ENCODE measurements at regions of chr4 and their contacts with region 1.

Region 1: DNA sequence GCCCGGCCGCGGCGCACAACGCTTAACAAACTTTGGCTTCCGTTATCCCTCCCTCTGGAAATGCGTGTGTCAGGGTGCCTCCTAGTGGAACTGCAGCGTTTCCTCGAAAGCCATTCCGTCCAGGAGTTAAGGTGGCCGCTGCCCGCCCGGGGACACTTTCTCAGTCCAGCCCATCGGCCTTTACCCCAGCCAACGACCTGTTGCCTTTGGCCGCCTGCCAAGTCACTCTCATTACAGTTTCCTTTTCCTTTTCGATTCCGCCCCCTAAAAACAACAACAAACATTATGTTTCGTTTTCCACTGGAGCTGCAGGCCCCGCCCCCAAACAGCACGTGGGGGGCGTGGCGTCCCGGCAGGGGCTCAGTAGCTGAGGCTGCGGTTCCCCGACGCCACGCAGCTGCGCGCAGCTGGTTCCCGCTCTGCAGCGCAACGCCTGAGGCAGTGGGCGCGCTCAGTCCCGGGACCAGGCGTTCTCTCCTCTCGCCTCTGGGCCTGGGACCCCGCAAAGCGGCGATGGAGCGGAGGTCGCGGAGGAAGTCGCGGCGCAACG is at the start of gene HERC5:
- DNase-seq: peak; percentile 95 to 97
- ATAC-seq: peak; percentile 96
- H3K4me3 ChIP-seq: peak within 1 kb of the TSS; percentile 20 to 82
- H3K27ac ChIP-seq: peak within 1 kb of the TSS; percentile 41 to 57
- H3K4me1 ChIP-seq: no peaks in the 10 kb centered on the region
- H3K27me3 ChIP-seq: no peaks in the 10 kb centered on the region
- total RNA-seq, gene HERC5: 9.6 to 9.8 TPM

Region 2: GRCh38 chr4:88223516-88223915 is 233.3 kb before region 1 on chr4:
- intact Hi-C with region 1: loop called (anchors 5 kb)
- DNase-seq: no peak
- ATAC-seq: no peak
- H3K4me3 ChIP-seq: no peak overlapping the region
- H3K27ac ChIP-seq: no peak overlapping the region
- H3K4me1 ChIP-seq: peaks cover 3% of the 10 kb centered on the region in 2 donors
- H3K27me3 ChIP-seq: no peaks in the 10 kb centered on the region

Region 3: GRCh38 chr4:88284439-88285234 is 172.2 kb before region 1 on chr4 and contains the start of gene PPM1K:
- intact Hi-C with region 1: loop called (anchors 5 to 10 kb)
- DNase-seq: peak; percentile 100
- ATAC-seq: peak; percentile 98
- H3K4me3 ChIP-seq: peak within 1 kb of the TSS; percentile 83
- H3K27ac ChIP-seq: peak within 1 kb of the TSS; percentile 97
- H3K4me1 ChIP-seq: no peaks in the 10 kb centered on the region
- H3K27me3 ChIP-seq: no peaks in the 10 kb centered on the region
- total RNA-seq, gene PPM1K: 39.2 to 51.4 TPM

Region 4: DNA sequence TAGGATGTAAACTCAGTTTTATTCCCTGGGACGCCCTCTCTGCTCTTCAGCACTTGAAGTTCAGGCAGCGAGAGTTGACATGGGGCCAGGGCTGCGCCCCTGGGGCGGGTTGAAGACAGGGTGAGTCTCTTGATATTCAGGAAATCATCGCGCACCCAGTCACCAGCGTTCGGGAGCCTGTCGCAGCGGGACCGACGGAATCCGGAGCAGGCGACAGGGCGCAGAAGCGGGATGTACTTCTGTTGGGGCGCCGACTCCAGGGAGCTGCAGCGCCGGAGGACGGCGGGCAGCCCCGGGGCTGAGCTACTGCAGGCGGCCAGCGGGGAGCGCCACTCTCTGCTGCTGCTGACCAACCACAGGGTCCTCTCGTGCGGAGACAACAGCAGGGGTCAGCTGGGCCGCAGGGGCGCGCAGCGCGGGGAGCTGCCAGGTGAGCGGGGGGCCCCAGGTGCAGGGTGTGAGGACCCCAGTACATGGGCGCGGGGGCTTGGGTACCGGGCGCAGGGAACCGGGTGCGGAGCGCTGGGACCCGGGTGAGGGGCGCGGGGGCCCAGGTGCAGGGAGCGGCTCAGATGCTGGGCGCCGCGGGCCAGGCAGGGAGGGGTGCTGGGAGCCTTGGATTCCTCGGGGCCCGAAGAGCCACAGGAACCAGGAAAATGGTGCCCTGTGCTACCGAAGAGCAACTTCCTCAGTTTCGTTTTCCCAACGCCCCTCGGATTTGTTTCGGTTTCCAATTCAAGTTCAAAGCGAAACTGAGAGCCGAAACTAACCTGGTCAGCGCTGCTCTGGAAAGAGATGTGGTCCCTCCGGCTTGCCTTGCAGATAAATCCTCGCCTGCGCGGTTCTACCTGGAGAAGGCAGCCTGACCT is 77.9 kb before region 1 on chr4 and contains the start of gene HERC6:
- intact Hi-C with region 1: loop called (anchors 5 kb)
- DNase-seq: peak; percentile 85 to 88
- ATAC-seq: peak; percentile 96
- H3K4me3 ChIP-seq: peak within 1 kb of the TSS; percentile 50 to 60
- H3K27ac ChIP-seq: peak within 1 kb of the TSS in 1 of 2 donors; percentile 1
- H3K4me1 ChIP-seq: no peaks in the 10 kb centered on the region
- H3K27me3 ChIP-seq: no peaks in the 10 kb centered on the region
- total RNA-seq, gene HERC6: 6.9 to 9.5 TPM

Measured in aorta (tissue), 5 donors.